ENCODE measurements at regions of chr20 and their contacts with region 1.

Region 1: GRCh38 chr20:32249030-32249738 is 28.3 kb upstream of the KIF3B start:
- DNase-seq: no peak
- ATAC-seq: no peak
- H3K4me3 ChIP-seq: no peak overlapping the region
- H3K27ac ChIP-seq: no peak overlapping the region
- H3K4me1 ChIP-seq: peaks cover 3% of the 10 kb centered on the region; the same call in 1 of the 2 replicates
- H3K27me3 ChIP-seq: peaks cover 3% of the 10 kb centered on the region; the same call in 1 of the 2 replicates
- CTCF ChIP-seq: no peak
- POLR2A ChIP-seq: no peak
- RAD21 ChIP-seq: no peak

Region 2: DNA sequence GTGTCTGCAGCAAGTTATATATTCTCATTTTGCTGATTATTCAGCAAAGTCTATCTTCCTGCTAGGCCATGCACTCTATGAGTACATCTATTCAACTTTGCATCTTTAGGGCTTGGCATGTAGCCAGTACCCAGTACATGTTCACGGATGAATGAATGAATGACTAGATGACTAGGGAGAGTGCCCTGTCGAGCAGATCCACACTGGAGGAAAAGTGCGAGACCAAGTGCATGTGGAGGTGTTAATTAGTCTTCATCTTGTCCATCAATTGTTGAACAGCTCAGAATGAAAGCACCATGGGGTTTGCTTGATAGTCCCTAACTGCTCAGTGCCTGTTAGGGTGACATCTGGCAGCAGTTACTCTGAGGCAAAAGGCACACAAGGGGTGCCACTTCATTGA is 109.2 kb before region 1 on chr20:
- CTCF ChIA-PET with region 1: no interaction called
- POLR2A ChIA-PET with region 1: no interaction called
- dilution Hi-C with region 1: no loop called
- in situ Hi-C with region 1: no loop called
- intact Hi-C with region 1: no loop called
- DNase-seq: no peak
- ATAC-seq: no peak
- H3K4me3 ChIP-seq: no peak overlapping the region
- H3K27ac ChIP-seq: no peak overlapping the region
- H3K4me1 ChIP-seq: peaks cover 2% of the 10 kb centered on the region
- H3K27me3 ChIP-seq: no peaks in the 10 kb centered on the region
- CTCF ChIP-seq: no peak
- POLR2A ChIP-seq: no peak
- RAD21 ChIP-seq: no peak

Region 3: GRCh38 chr20:32404017-32404416 is 154.8 kb after region 1 on chr20:
- CTCF ChIA-PET with region 1: no interaction called
- POLR2A ChIA-PET with region 1: interaction called, 16 read pairs
- dilution Hi-C with region 1: no loop called
- in situ Hi-C with region 1: no loop called
- intact Hi-C with region 1: no loop called
- DNase-seq: no peak
- ATAC-seq: no peak
- H3K4me3 ChIP-seq: no peak overlapping the region
- H3K27ac ChIP-seq: no peak overlapping the region
- H3K4me1 ChIP-seq: no peaks in the 10 kb centered on the region
- H3K27me3 ChIP-seq: no peaks in the 10 kb centered on the region
- CTCF ChIP-seq: no peak
- POLR2A ChIP-seq: no peak
- RAD21 ChIP-seq: no peak

Measured in IMR-90 (cell line).